Dendritic cell treated with granulocyte-macrophage colony-stimulating factor and Interleukin-4, amounts not matched to agents 40 ng/mL and 50 ng/mL, for 4 days (primary cell): ENCODE measurements at regions of chr7 and their contacts with region 1.

Region 1: GRCh38 chr7:85030893-85031292 is 156.0 kb downstream of the SEMA3D start:
- H3K4me3 Mint-ChIP-seq: no peak overlapping the region
- H3K27ac Mint-ChIP-seq: no peak overlapping the region
- H3K4me1 Mint-ChIP-seq: no peaks in the 10 kb centered on the region
- H3K27me3 Mint-ChIP-seq: no peaks in the 10 kb centered on the region

Region 2: DNA sequence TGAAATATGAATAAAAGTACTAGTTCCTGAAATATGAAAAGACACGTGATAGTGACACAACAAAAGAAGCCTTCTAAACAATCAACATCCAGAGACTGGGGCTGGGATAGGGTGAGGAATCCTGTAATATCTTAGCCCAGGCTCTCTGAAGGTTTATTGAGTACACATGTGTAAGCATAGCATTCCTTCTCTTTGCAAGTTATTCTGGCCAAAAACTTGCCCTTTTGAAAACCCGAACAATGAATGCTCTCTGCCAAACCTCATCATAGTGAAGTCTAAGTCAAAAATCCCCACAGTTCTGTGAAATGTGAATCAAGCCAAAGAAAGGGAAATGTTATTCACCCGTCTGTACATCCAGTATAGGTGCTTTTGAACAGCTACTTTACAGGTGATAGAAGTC is 144.3 kb after region 1 on chr7:
- intact Hi-C with region 1: no loop called
- H3K4me3 Mint-ChIP-seq: no peak overlapping the region
- H3K27ac Mint-ChIP-seq: no peak overlapping the region
- H3K4me1 Mint-ChIP-seq: no peaks in the 10 kb centered on the region
- H3K27me3 Mint-ChIP-seq: no peaks in the 10 kb centered on the region

Region 3: GRCh38 chr7:85829817-85830432 is 799.0 kb after region 1 on chr7:
- intact Hi-C with region 1: loop called (anchors 5 kb)
- H3K4me3 Mint-ChIP-seq: no peak overlapping the region
- H3K27ac Mint-ChIP-seq: no peak overlapping the region
- H3K4me1 Mint-ChIP-seq: no peaks in the 10 kb centered on the region
- H3K27me3 Mint-ChIP-seq: no peaks in the 10 kb centered on the region

Region 4: DNA sequence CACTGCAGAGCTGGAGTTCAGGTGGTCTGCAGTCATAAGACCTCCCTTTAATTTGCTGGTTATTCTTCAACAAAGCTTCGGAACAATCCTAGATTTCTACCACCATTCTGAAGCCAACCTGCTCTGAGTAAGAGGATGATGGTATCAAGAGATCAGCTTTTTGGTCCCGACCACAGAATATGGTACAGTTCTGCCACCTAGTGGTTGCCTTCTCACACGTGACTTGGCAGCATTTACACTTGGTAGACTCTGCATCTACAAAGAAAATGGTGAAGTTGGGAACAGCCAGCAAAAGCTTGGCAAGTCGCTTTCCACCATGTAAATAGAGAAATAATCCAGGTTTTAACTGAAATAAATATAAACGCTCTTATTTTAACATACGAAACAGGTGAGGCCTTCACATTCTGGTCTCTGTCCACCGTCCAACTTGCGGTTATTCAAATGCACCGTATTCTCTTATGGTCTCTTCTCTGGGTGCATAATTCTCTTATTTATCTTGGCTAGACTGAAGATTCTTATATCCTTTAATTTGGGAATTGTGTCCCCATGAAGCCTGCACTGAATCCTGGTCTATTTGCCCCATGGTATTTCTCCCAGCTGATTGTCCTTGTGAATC is 1438.9 kb after region 1 on chr7:
- intact Hi-C with region 1: loop called (anchors 2 kb)
- H3K4me3 Mint-ChIP-seq: no peak overlapping the region
- H3K27ac Mint-ChIP-seq: no peak overlapping the region
- H3K4me1 Mint-ChIP-seq: no peaks in the 10 kb centered on the region
- H3K27me3 Mint-ChIP-seq: no peaks in the 10 kb centered on the region